ENCODE measurements at regions of chr4 and their contacts with region 1.

Region 1: GRCh38 chr4:52529983-52530382 is 129.1 kb downstream of the USP46 start:
- DNase-seq: no peak
- ATAC-seq: no peak
- H3K4me3 ChIP-seq: no peak overlapping the region
- H3K27ac ChIP-seq: no peak overlapping the region
- H3K4me1 ChIP-seq: peaks cover 0 to 4% (median 0%) of the 10 kb centered on the region in 9 donors
- H3K27me3 ChIP-seq: no peaks in the 10 kb centered on the region
- CTCF ChIP-seq: no peak

Region 2: DNA sequence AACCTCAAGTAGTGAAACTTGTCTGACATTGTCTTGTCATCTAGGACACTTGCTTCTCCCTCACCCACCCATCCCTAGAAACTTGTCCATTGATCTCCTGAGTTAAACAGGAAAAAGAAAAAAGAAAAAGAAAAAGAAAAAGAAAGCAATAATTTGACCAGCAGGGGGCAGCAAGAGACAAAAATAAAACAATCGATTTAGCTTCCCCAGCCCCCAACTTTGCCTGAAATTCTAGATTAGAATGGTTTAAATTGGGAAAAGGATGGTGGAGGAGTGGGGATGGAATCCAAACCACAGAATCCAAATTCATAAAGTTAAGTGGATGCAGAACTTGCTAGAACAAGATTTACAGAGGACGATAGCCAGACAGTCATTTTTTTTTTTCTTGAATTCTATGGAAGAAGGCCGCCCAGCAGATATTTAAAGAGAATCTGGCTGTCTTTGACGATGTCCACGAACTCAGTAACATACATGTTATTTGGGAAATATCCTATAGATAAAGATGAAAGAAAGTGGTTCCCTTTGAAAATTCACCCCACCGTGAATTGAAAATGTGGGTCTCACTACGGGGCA is 153.8 kb before region 1 on chr4:
- intact Hi-C with region 1: loop called in 1 of 10 experiments (anchors 10 kb)
- DNase-seq: peak in 1 of 2 donors; percentile 38
- ATAC-seq: peak in 1 of 8 donors; percentile 21
- H3K4me3 ChIP-seq: no peak overlapping the region
- H3K27ac ChIP-seq: no peak overlapping the region
- H3K4me1 ChIP-seq: peaks cover 0 to 9% (median 0%) of the 10 kb centered on the region in 9 donors
- H3K27me3 ChIP-seq: peaks cover 0 to 6% (median 0%) of the 10 kb centered on the region in 7 donors
- CTCF ChIP-seq: peak; percentile 51 to 71 (median 62)

Region 3: GRCh38 chr4:52407545-52407944 is 122.4 kb before region 1 on chr4:
- intact Hi-C with region 1: loop called in 1 of 10 experiments (anchors 10 kb)
- DNase-seq: no peak
- ATAC-seq: no peak
- H3K4me3 ChIP-seq: no peak overlapping the region
- H3K27ac ChIP-seq: no peak overlapping the region
- H3K4me1 ChIP-seq: peaks cover 0 to 17% (median 0%) of the 10 kb centered on the region in 9 donors
- H3K27me3 ChIP-seq: no peaks in the 10 kb centered on the region
- CTCF ChIP-seq: no peak

Measured in heart right ventricle (tissue), 16 donors.